ENCODE measurements at regions of chr1 and their contacts with region 1.

Region 1: DNA sequence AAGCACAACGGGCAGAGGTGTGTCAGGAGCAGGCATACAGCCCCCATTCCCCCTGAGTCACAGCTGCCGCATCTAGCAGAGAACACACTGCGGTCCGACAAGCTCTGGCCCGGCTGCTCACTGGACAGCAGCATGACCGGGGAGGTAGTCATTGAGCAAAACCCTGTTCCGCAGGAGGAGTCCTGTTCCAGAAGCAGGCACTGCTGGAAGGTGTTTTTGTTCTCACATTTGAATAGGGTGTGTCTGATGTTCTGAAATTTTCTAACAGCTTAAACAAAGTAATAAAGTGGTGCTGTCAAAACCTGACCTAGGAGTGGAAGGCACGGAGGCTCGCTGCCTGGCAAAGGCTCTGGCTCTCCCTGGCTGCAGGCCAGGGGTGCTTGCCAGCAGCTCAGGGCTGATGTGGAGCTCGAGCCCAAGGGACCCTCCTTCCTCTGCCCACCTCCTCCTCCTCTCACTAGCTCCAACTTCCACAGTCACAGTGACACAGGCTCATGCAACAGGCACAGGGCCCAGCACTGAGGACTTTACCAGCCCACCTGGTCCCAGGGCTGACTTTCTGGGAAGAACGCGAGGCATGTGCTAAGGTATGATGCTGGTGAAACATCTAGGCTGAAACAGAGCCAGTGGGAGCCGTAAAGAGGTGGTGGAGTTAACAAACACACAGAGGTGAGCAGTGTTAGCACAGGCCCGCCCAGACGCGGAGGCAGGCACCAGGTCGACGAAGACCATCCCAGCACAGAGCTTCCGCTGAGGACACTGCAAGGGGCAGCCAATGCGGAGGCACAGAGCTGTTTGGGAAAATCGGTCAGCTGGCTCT is 118.6 kb upstream of the IFFO2 start:
- DNase-seq: peak in 1 of 2 donors; percentile 77
- ATAC-seq: peak; percentile 41 to 79 (median 67)
- H3K4me3 ChIP-seq: no peak overlapping the region
- H3K27ac ChIP-seq: peak overlapping the region; percentile 85
- H3K4me1 ChIP-seq: peaks cover 27% of the 10 kb centered on the region
- H3K27me3 ChIP-seq: no peaks in the 10 kb centered on the region
- CTCF ChIP-seq: no peak

Region 2: DNA sequence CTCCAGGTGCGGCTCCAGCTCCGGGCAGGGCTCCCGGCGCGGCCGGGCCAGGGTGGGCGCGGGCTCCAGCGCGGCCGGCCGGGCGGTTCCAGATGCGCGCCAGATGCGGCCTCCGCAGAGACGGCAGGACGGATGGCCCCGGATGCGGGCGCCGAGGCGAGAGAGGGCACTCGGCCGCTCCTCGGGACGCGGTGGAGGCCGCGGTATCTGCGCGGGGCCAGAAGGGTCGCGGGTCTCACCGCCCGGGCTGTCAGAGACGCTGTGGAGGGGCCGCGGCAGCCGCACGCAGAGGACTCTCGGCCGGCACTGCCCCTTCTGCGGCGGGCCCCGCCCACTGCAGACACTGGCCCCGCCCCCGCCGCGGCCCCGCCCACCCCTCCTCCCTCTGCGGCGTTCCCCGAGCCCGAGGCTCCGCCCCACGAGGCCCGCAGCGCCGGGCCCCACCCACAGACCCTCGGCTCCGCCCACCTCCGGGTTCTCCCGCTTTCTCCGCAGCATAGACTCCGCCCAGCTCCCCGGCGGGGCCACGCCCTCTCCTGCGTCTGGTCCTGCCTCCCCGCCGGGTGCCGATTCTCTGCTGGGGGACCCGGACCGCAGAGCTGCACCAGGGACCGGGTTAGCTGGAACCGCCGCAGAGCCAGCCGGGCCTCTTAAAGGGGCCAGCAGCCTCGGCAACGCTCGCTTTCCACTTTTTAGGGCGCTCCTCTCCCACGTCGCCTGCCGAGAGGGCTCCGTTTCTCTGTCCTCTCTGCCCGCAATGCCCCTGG is 118.6 kb before region 1 on chr1 and contains the start of gene IFFO2:
- intact Hi-C with region 1: loop called in 1 of 2 experiments (anchors 10 kb)
- DNase-seq: peak; percentile 98 to 99
- ATAC-seq: peak; percentile 97 to 98 (median 98)
- H3K4me3 ChIP-seq: peak within 1 kb of the TSS; percentile 80
- H3K27ac ChIP-seq: peak within 1 kb of the TSS; percentile 68
- H3K4me1 ChIP-seq: peaks cover 15% of the 10 kb centered on the region
- H3K27me3 ChIP-seq: no peaks in the 10 kb centered on the region
- CTCF ChIP-seq: no peak
- total RNA-seq, gene IFFO2: 3.7 to 14.0 (median 6.8) TPM

Region 3: GRCh38 chr1:19029191-19030105 is 45.7 kb before region 1 on chr1:
- intact Hi-C with region 1: loop called in 1 of 2 experiments (anchors 2 kb)
- DNase-seq: no peak
- ATAC-seq: peak in 3 of 4 donors; percentile 37 to 65 (median 57)
- H3K4me3 ChIP-seq: no peak overlapping the region
- H3K27ac ChIP-seq: no peak overlapping the region
- H3K4me1 ChIP-seq: no peaks in the 10 kb centered on the region
- H3K27me3 ChIP-seq: peaks cover 0 to 29% (median 2%) of the 10 kb centered on the region in 3 donors
- CTCF ChIP-seq: no peak

Region 4: GRCh38 chr1:19062258-19063029 is 12.7 kb before region 1 on chr1:
- intact Hi-C with region 1: no loop called
- DNase-seq: no peak
- ATAC-seq: no peak
- H3K4me3 ChIP-seq: no peak overlapping the region
- H3K27ac ChIP-seq: no peak overlapping the region
- H3K4me1 ChIP-seq: no peaks in the 10 kb centered on the region
- H3K27me3 ChIP-seq: peaks cover 0 to 13% (median 0%) of the 10 kb centered on the region in 3 donors
- CTCF ChIP-seq: no peak

Measured in psoas muscle (tissue), 8 donors.